A673 (cell line): ENCODE measurements at regions of chr9 and their contacts with region 1.

Region 1: GRCh38 chr9:88733651-88734421 is 198.9 kb downstream of the NXNL2 start:
- DNase-seq: peak; percentile 83
- H3K4me3 ChIP-seq: no peak overlapping the region
- H3K27ac ChIP-seq: peak overlapping the region; percentile 65
- H3K4me1 ChIP-seq: peaks cover 45% of the 10 kb centered on the region
- H3K27me3 ChIP-seq: no peaks in the 10 kb centered on the region
- CTCF ChIP-seq: no peak

Region 2: GRCh38 chr9:88680505-88681160 is 53.2 kb before region 1 on chr9:
- CTCF ChIA-PET with region 1: no interaction called
- POLR2A ChIA-PET with region 1: no interaction called
- intact Hi-C with region 1: no loop called
- DNase-seq: no peak
- H3K4me3 ChIP-seq: no peak overlapping the region
- H3K27ac ChIP-seq: no peak overlapping the region
- H3K4me1 ChIP-seq: peaks cover 10% of the 10 kb centered on the region
- H3K27me3 ChIP-seq: no peaks in the 10 kb centered on the region
- CTCF ChIP-seq: no peak

Region 3: GRCh38 chr9:88781628-88782391 is 48.0 kb after region 1 on chr9:
- CTCF ChIA-PET with region 1: no interaction called
- POLR2A ChIA-PET with region 1: no interaction called
- intact Hi-C with region 1: loop called (anchors 5 kb)
- DNase-seq: peak; percentile 93
- H3K4me3 ChIP-seq: no peak overlapping the region
- H3K27ac ChIP-seq: peak overlapping the region; percentile 24
- H3K4me1 ChIP-seq: peaks cover 44% of the 10 kb centered on the region
- H3K27me3 ChIP-seq: no peaks in the 10 kb centered on the region
- CTCF ChIP-seq: peak; percentile 75

Region 4: GRCh38 chr9:89405826-89406225 is 672.0 kb after region 1 on chr9:
- CTCF ChIA-PET with region 1: no interaction called
- POLR2A ChIA-PET with region 1: no interaction called
- intact Hi-C with region 1: no loop called
- DNase-seq: no peak
- H3K4me3 ChIP-seq: no peak overlapping the region
- H3K27ac ChIP-seq: no peak overlapping the region
- H3K4me1 ChIP-seq: no peaks in the 10 kb centered on the region
- H3K27me3 ChIP-seq: no peaks in the 10 kb centered on the region
- CTCF ChIP-seq: no peak